ENCODE measurements at regions of chr2 and their contacts with region 1.

Region 1: DNA sequence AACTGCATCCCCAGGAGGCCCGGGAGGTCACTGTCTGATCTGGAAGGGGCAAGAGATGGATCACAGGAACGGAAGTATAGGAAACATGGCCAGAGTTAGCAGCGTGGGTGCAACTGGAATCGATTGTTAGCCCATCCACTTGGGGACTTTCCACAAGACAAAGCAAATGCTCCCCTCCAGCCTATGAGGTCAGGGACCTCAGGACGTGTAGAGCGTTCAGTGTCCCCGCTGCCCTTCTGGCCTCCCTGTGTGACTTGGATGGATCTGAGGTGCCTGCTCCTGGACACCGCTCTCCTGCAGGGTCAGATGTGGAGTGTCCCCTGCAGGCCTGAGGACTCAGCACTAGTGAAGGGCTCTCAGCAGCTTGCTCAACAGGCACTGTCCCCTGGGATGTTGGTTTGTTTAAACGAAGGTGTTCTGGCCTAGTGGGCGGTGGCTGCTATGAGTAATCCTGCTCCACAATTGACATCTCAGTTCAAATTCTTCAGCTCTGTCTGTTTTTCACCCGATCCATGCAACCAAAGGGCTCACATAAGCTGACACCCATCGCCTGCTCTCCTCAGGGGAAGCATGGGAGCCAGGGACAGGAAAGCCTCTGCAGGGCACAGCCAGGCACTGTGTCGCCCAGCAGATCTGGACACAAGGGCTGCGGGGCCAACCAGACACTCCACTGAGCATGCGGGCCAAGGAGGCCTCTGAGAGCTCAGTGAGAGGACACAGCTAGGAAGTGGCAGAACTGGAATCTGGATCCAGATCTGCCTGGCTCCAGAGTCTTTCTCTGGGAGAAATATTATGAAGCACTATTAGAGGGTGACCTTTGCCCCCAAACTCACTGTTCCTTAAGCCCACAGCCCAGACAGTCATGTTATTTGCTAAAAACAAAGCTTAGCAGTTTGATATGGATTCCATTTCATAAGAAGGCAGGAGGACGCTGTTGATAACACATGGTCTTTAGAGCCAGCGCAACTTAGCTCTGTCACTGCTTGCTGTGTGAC is 78.5 kb downstream of the RHOB start:
- DNase-seq: peak in 4 of 5 donors; percentile 38 to 74 (median 58)
- ATAC-seq: peak; percentile 63 to 78 (median 68)
- H3K4me3 ChIP-seq: no peak overlapping the region
- H3K27ac ChIP-seq: peak overlapping the region; percentile 15 to 80 (median 68)
- H3K4me1 ChIP-seq: peaks cover 4 to 66% (median 44%) of the 10 kb centered on the region in 12 donors
- H3K27me3 ChIP-seq: no peaks in the 10 kb centered on the region
- CTCF ChIP-seq: peak in 1 of 12 donors; percentile 9
- POLR2A ChIP-seq: no peak

Region 2: GRCh38 chr2:20466417-20466911 is 58.9 kb before region 1 on chr2:
- intact Hi-C with region 1: loop called in 1 of 10 experiments (anchors 5 kb)
- DNase-seq: peak in 2 of 5 donors; percentile 18 to 20
- ATAC-seq: no peak
- H3K4me3 ChIP-seq: no peak overlapping the region
- H3K27ac ChIP-seq: peak overlapping the region in 1 of 12 donors; percentile 48
- H3K4me1 ChIP-seq: peaks cover 0 to 5% (median 0%) of the 10 kb centered on the region in 12 donors
- H3K27me3 ChIP-seq: no peaks in the 10 kb centered on the region
- CTCF ChIP-seq: no peak
- POLR2A ChIP-seq: no peak

Region 3: GRCh38 chr2:20573620-20574422 is 48.5 kb after region 1 on chr2:
- intact Hi-C with region 1: loop called in 6 of 10 experiments (anchors 2 to 5 kb)
- DNase-seq: peak in 1 of 5 donors; percentile 61
- ATAC-seq: no peak
- H3K4me3 ChIP-seq: no peak overlapping the region
- H3K27ac ChIP-seq: peak overlapping the region; percentile 48 to 94 (median 69)
- H3K4me1 ChIP-seq: peaks cover 14 to 99% (median 91%) of the 10 kb centered on the region in 12 donors
- H3K27me3 ChIP-seq: no peaks in the 10 kb centered on the region
- CTCF ChIP-seq: no peak
- POLR2A ChIP-seq: no peak

Region 4: DNA sequence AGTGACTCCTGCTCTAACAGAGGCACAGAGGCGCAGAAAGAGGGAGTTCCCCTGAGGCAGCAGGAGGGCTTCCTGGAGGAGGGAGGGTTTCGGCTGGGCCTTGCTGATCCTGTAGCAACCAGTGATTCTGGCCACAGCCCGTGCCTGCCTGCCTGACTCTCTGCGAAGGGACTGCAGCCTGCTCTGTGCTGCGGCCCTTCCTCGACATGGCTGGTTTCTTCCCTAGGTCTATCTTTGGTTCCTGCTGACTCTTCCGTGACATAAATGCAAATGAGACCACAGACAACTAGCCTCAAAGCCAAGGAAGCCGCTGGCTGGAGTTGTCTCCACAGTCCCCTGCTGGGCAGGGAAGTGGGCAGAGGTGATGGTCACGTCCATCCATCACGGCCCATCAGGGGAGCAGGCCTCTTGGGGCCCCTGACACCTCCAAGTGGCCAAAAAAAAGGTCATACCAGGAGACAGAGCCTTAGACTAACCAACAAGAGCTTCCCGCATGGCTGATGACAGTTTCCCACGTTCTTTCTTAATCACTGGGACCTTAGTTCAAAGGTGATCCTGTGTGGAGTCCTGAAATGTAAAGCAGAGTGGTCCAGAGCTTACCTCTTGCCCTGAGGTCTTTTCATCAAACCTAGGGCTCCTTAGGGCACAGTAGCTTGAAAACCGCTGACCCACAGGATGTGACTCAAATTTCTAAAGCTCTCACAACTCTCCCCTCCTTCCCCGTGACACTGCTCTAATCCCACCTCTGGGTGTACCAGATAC is 70.3 kb after region 1 on chr2:
- intact Hi-C with region 1: loop called in 2 of 10 experiments (anchors 1 to 5 kb)
- DNase-seq: peak in 3 of 5 donors; percentile 35 to 56 (median 36)
- ATAC-seq: peak in 1 of 4 donors; percentile 4
- H3K4me3 ChIP-seq: no peak overlapping the region
- H3K27ac ChIP-seq: peak overlapping the region; percentile 66 to 92 (median 79)
- H3K4me1 ChIP-seq: peaks cover 13 to 90% (median 63%) of the 10 kb centered on the region in 12 donors
- H3K27me3 ChIP-seq: no peaks in the 10 kb centered on the region
- CTCF ChIP-seq: no peak
- POLR2A ChIP-seq: peak in 1 of 2 donors; percentile 16

Region 5: DNA sequence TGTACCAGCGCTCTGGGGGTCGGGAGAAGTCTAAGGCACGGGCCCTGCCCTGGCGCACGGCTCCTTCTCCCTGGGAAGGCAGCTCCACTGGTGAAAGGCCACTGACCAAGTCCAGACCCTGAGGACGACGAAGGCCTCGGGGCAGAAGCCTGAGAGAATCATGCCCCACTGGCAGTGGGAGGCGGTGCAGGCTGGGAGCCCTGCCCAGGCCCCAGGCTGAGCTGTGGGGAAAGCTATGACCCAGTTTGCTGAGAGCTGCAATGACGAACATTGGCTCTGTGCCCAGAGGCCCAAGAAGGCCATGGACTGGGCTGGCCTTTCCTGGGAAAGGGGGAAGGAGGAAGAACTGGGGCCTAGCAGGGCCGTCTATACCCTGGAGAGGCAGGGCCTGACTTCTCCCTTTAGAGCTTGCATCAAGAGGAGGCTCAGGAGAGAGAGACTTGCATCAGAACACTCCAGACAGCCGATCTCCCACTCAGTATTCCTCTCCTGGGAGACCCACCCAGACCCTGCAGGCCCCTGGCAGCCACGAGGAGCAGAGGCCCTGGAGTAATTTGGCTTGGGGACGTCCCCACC is 92.6 kb after region 1 on chr2:
- intact Hi-C with region 1: loop called in 4 of 10 experiments (anchors 5 to 10 kb)
- DNase-seq: peak; percentile 96 to 99 (median 98)
- ATAC-seq: peak; percentile 79 to 84 (median 82)
- H3K4me3 ChIP-seq: peak overlapping the region in 1 of 12 donors; percentile 5
- H3K27ac ChIP-seq: peak overlapping the region; percentile 86 to 99 (median 95)
- H3K4me1 ChIP-seq: peaks cover 43 to 97% (median 85%) of the 10 kb centered on the region in 12 donors
- H3K27me3 ChIP-seq: no peaks in the 10 kb centered on the region
- CTCF ChIP-seq: peak; percentile 15 to 75 (median 52)
- POLR2A ChIP-seq: peak in 1 of 2 donors; percentile 48

Region 6: GRCh38 chr2:20771299-20771698 is 246.0 kb after region 1 on chr2:
- intact Hi-C with region 1: no loop called
- DNase-seq: no peak
- ATAC-seq: no peak
- H3K4me3 ChIP-seq: no peak overlapping the region
- H3K27ac ChIP-seq: no peak overlapping the region
- H3K4me1 ChIP-seq: no peaks in the 10 kb centered on the region
- H3K27me3 ChIP-seq: no peaks in the 10 kb centered on the region
- CTCF ChIP-seq: no peak
- POLR2A ChIP-seq: no peak

Measured in heart left ventricle (tissue), 16 donors.